ENCODE measurements at regions of chr17 and their contacts with region 1.

Region 1: GRCh38 chr17:76506408-76507349 is 5.5 kb upstream of the RHBDF2 start:
- DNase-seq: peak; percentile 93
- ATAC-seq: peak; percentile 76

Region 2: DNA sequence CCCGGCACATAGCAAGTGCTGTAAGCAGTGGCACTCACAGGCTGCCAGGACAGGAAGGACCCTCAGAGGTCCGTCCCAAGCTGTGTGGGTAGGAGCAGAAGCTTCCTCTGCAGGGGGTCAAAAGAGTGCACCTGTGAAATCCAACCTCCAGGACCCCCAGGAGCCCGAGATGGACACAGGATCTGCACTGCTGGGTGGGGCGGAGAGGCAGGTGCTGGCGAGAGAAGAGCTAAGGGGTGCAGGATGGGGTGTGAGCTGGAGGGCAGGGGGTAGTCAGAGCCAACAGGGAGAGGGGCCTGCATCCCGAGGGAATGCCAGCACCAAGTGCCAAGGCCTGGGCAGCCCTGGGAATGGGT is 39.9 kb before region 1 on chr17:
- intact Hi-C with region 1: loop called (anchors 1 kb)
- DNase-seq: peak; percentile 53
- ATAC-seq: no peak